ENCODE measurements at regions of chr4 and their contacts with region 1.

Region 1: GRCh38 chr4:102564399-102565059 is 63.4 kb downstream of the NFKB1 start:
- DNase-seq: peak; percentile 59
- ATAC-seq: peak; percentile 51
- H3K4me3 Mint-ChIP-seq: no peak overlapping the region
- H3K27ac Mint-ChIP-seq: peak overlapping the region; percentile 85
- H3K4me1 Mint-ChIP-seq: peaks cover 84% of the 10 kb centered on the region
- H3K27me3 Mint-ChIP-seq: no peaks in the 10 kb centered on the region

Region 2: DNA sequence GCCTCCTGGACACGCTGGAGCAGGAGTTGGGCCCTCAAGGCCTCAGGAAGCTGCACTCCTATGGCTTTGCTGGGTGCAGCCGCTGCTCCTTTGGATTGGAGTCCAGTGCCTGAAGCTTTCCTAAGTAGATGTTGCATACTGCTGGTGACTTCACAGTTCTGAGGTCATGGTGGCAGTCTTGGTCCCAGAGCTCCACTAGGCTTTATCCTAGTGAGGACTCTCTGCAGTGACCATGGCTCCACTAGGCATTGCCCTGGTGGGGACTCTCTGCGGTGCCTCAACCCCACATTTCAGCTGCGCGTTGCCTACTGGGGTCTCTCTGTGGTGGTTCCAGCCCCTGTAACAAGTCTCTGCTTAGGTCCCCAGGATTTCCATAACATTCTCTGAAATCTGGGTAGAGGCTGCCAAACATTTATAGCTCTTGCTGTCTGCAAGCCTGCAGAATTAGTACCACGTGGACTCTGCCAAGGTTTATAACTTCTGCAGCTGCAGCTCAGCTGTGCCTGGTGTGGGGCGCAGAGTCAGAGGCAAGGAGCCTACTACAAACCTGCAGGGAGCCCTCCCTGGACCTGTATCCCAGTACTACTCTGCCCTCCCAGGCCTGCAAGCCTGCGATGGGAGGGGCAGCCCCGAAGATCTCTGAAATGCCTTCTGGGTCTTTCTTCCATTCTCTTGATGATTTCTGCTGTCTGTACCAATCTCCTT is 109.4 kb before region 1 on chr4:
- CTCF ChIA-PET with region 1: no interaction called
- POLR2A ChIA-PET with region 1: no interaction called
- intact Hi-C with region 1: no loop called
- DNase-seq: no peak
- ATAC-seq: no peak
- H3K4me3 Mint-ChIP-seq: no peak overlapping the region
- H3K27ac Mint-ChIP-seq: peak overlapping the region; percentile 53
- H3K4me1 Mint-ChIP-seq: peaks cover 48% of the 10 kb centered on the region
- H3K27me3 Mint-ChIP-seq: no peaks in the 10 kb centered on the region

Region 3: GRCh38 chr4:102535398-102536082 is 29.0 kb before region 1 on chr4:
- CTCF ChIA-PET with region 1: interaction called, 5 read pairs
- POLR2A ChIA-PET with region 1: no interaction called
- intact Hi-C with region 1: loop called in 1 of 2 experiments (anchors 1 kb)
- DNase-seq: no peak
- ATAC-seq: peak; percentile 90
- H3K4me3 Mint-ChIP-seq: peak overlapping the region; percentile 39
- H3K27ac Mint-ChIP-seq: peak overlapping the region; percentile 25
- H3K4me1 Mint-ChIP-seq: peaks cover 58% of the 10 kb centered on the region
- H3K27me3 Mint-ChIP-seq: no peaks in the 10 kb centered on the region

Region 4: DNA sequence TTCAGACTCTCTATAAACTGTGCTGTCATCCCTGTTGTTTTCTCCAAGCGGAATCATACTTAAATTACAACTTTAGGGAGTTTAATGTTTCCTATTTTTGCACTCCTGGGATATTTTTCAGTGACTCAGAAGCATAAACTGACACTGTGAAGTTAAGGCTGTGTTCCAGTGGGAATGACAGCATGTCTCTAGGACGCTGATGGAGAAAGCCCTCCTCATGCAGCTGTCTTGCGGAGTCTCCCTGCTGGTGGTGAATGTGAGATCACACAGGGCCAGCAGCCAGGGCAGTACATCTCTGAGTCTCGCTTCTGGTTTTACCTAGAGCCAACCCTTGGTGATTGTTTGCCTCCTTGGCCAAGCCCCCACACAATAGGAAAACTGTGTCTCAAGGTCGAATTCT is 10.0 kb before region 1 on chr4:
- CTCF ChIA-PET with region 1: no interaction called
- POLR2A ChIA-PET with region 1: no interaction called
- intact Hi-C with region 1: loop called in 1 of 2 experiments (anchors 1 kb)
- DNase-seq: no peak
- ATAC-seq: no peak
- H3K4me3 Mint-ChIP-seq: no peak overlapping the region
- H3K27ac Mint-ChIP-seq: no peak overlapping the region
- H3K4me1 Mint-ChIP-seq: peaks cover 58% of the 10 kb centered on the region
- H3K27me3 Mint-ChIP-seq: no peaks in the 10 kb centered on the region

Region 5: DNA sequence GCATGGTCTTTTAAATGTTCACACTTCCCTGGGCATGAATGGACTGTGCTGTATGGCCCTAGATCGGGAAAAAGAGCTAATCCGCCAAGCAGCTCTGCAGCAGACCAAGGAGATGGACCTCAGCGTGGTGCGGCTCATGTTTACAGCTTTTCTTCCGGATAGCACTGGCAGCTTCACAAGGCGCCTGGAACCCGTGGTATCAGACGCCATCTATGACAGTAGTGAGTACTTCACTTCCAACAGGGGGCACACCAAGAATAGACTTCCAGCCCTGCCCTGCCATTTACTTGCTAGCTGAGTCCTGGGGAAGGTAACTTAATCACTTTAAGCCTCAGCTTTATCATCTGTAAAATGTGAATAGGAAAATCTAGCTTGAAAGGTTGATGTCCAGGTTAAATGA is 14.3 kb after region 1 on chr4:
- CTCF ChIA-PET with region 1: interaction called, 11 read pairs
- POLR2A ChIA-PET with region 1: no interaction called
- intact Hi-C with region 1: loop called in 1 of 2 experiments (anchors 2 kb)
- DNase-seq: peak; percentile 30
- ATAC-seq: no peak
- H3K4me3 Mint-ChIP-seq: no peak overlapping the region
- H3K27ac Mint-ChIP-seq: peak overlapping the region; percentile 38
- H3K4me1 Mint-ChIP-seq: peaks cover 76% of the 10 kb centered on the region
- H3K27me3 Mint-ChIP-seq: no peaks in the 10 kb centered on the region

Region 6: GRCh38 chr4:102598086-102598761 is 33.7 kb after region 1 on chr4:
- CTCF ChIA-PET with region 1: no interaction called
- POLR2A ChIA-PET with region 1: no interaction called
- intact Hi-C with region 1: loop called in 1 of 2 experiments (anchors 2 kb)
- DNase-seq: no peak
- ATAC-seq: peak; percentile 68
- H3K4me3 Mint-ChIP-seq: peak overlapping the region; percentile 18
- H3K27ac Mint-ChIP-seq: peak overlapping the region; percentile 90
- H3K4me1 Mint-ChIP-seq: peaks cover 70% of the 10 kb centered on the region
- H3K27me3 Mint-ChIP-seq: no peaks in the 10 kb centered on the region

Measured in activated CD4-positive, alpha-beta T cell treated with anti-CD3 and anti-CD28 coated beads for 36 hours (primary cell).